ENCODE measurements at regions of chr4 and their contacts with region 1.

Region 1: DNA sequence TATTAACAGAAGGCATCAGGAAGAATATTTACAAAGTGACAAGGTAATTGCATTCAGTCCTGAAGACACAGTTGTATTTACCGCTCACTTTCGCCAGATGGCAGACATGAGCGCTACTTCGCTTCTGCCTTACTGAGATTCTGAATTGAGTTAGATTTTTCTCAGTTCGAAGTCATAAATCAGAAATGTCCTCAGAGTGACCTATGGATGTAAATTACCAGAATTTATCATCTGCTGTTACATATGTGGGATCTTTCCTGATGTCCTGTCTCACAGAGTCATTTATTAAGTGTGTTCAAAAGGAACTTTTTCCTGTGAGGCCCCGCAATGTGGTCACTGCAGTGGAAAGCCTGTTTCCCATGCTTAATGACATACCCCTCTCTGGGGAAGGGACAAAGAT is 97.3 kb upstream of the DCLK2 start:
- DNase-seq: peak; percentile 60
- H3K4me3 ChIP-seq: no peak overlapping the region
- H3K27ac ChIP-seq: no peak overlapping the region
- H3K4me1 ChIP-seq: peaks cover 0 to 5% (median 0%) of the 10 kb centered on the region in 4 donors
- H3K27me3 ChIP-seq: no peaks in the 10 kb centered on the region
- CTCF ChIP-seq: peak; percentile 69 to 76 (median 74)
- EP300 ChIP-seq: no peak
- POLR2A ChIP-seq: no peak

Region 2: GRCh38 chr4:150867148-150867547 is 886.2 kb after region 1 on chr4:
- in situ Hi-C with region 1: loop called in 3 of 4 experiments (anchors 5 to 25 kb)
- intact Hi-C with region 1: loop called (anchors 10 kb)
- DNase-seq: no peak
- H3K4me3 ChIP-seq: no peak overlapping the region
- H3K27ac ChIP-seq: no peak overlapping the region
- H3K4me1 ChIP-seq: no peaks in the 10 kb centered on the region
- H3K27me3 ChIP-seq: no peaks in the 10 kb centered on the region
- CTCF ChIP-seq: peak; percentile 55 to 78 (median 63)
- EP300 ChIP-seq: no peak
- POLR2A ChIP-seq: no peak

Region 3: GRCh38 chr4:150874338-150875226 is 893.6 kb after region 1 on chr4:
- in situ Hi-C with region 1: loop called in 3 of 4 experiments (anchors 5 to 25 kb)
- intact Hi-C with region 1: loop called (anchors 10 kb)
- DNase-seq: no peak
- H3K4me3 ChIP-seq: no peak overlapping the region
- H3K27ac ChIP-seq: no peak overlapping the region
- H3K4me1 ChIP-seq: no peaks in the 10 kb centered on the region
- H3K27me3 ChIP-seq: no peaks in the 10 kb centered on the region
- CTCF ChIP-seq: no peak
- EP300 ChIP-seq: no peak
- POLR2A ChIP-seq: no peak

Measured in transverse colon (tissue), 4 donors.